Activated T-helper 1 cell treated with anti-CD3 and anti-CD28 coated beads, Interleukin-12 subunit alpha, Interleukin-12 subunit beta, Interleukin-2, Interleukin-4 antibody, amounts not matched to agents 30 ng/mL and 10 ng/mL and 1 ng/mL, durations not matched to agents 14 hours and 24 hours and 36 hours (primary cell): ENCODE measurements at regions of chrX and their contacts with region 1.

Region 1: GRCh38 chrX:136162831-136163570 is 15.7 kb downstream of the FHL1 start:
- DNase-seq: peak; percentile 12
- H3K4me3 Mint-ChIP-seq: no peak overlapping the region
- H3K27ac Mint-ChIP-seq: no peak overlapping the region
- H3K4me1 Mint-ChIP-seq: no peaks in the 10 kb centered on the region
- H3K27me3 Mint-ChIP-seq: no peaks in the 10 kb centered on the region

Region 2: GRCh38 chrX:136200466-136200865 is 37.5 kb after region 1 on chrX:
- intact Hi-C with region 1: loop called (anchors 5 kb)
- DNase-seq: no peak
- H3K4me3 Mint-ChIP-seq: no peak overlapping the region
- H3K27ac Mint-ChIP-seq: no peak overlapping the region
- H3K4me1 Mint-ChIP-seq: peaks cover 42% of the 10 kb centered on the region
- H3K27me3 Mint-ChIP-seq: no peaks in the 10 kb centered on the region

Region 3: GRCh38 chrX:136268051-136269048 is 105.3 kb after region 1 on chrX:
- intact Hi-C with region 1: loop called (anchors 2 kb)
- DNase-seq: peak; percentile 21
- H3K4me3 Mint-ChIP-seq: no peak overlapping the region
- H3K27ac Mint-ChIP-seq: no peak overlapping the region
- H3K4me1 Mint-ChIP-seq: peaks cover 4% of the 10 kb centered on the region
- H3K27me3 Mint-ChIP-seq: no peaks in the 10 kb centered on the region

Region 4: DNA sequence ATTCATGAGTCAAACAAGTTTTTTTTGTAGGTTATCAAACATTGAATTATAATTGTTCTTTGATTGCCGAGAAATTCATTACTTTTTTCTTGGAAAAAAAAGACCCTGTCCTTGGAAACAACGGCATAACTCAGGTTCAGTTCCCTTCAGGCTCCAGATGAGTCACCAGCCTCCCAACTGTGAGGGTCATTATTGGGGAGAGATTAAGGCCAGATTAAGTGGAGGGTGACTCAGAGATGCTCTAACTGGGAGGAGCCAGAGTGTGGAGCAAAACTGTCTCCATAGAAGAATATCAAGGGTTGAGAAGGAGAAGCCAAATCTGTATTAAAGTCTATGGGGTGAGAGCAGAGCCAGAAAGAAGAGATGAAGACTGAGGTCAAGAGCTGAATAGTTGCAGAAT is 147.4 kb after region 1 on chrX:
- intact Hi-C with region 1: no loop called
- DNase-seq: no peak
- H3K4me3 Mint-ChIP-seq: no peak overlapping the region
- H3K27ac Mint-ChIP-seq: no peak overlapping the region
- H3K4me1 Mint-ChIP-seq: no peaks in the 10 kb centered on the region
- H3K27me3 Mint-ChIP-seq: peaks cover 8% of the 10 kb centered on the region